ENCODE measurements at regions of chr12 and their contacts with region 1.

Region 1: DNA sequence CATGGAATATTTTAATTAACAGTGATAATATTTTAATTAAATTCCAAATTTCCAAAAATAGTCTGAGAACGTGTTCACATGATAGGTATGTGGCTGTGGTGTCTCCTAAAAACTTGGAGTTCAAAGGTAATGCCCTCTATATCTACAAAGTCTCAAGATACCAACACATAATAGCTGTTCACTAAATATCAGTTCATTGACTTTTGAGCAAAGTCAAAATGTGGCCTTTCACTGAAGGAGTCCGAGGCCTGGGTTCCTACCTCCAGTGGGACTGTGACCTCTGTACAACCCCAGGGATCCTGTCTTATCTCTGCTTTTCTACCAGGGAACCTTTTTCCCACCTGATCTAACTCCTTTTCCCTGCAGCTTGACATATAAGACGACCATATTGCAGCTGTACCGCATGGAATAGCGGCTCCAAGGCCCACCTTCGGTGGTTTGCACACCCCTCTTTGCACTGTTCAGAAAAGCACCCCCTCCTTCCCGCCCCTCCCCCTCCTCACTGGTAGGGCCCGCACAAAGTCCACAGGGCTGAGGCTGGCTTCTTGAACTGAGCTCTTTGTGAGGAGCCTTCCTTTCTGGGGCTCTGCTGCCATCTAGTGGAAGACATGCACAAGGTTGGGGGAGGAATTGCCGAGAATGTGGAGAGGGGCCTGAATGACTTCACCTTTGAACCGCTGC is 3.1 kb downstream of the CCND2 start:
- DNase-seq: peak; percentile 91
- ATAC-seq: peak; percentile 40
- H3K4me3 ChIP-seq: no peak overlapping the region
- H3K4me3 Mint-ChIP-seq: peak overlapping the region; percentile 99
- H3K27ac ChIP-seq: no peak overlapping the region
- H3K27ac Mint-ChIP-seq: peak overlapping the region; percentile 2
- H3K4me1 ChIP-seq: peaks cover 18 to 37% of the 10 kb centered on the region in 2 donors
- H3K4me1 Mint-ChIP-seq: peaks cover 32% of the 10 kb centered on the region
- H3K27me3 ChIP-seq: no peaks in the 10 kb centered on the region
- H3K27me3 Mint-ChIP-seq: no peaks in the 10 kb centered on the region
- CTCF ChIP-seq: peak; percentile 85

Region 2: DNA sequence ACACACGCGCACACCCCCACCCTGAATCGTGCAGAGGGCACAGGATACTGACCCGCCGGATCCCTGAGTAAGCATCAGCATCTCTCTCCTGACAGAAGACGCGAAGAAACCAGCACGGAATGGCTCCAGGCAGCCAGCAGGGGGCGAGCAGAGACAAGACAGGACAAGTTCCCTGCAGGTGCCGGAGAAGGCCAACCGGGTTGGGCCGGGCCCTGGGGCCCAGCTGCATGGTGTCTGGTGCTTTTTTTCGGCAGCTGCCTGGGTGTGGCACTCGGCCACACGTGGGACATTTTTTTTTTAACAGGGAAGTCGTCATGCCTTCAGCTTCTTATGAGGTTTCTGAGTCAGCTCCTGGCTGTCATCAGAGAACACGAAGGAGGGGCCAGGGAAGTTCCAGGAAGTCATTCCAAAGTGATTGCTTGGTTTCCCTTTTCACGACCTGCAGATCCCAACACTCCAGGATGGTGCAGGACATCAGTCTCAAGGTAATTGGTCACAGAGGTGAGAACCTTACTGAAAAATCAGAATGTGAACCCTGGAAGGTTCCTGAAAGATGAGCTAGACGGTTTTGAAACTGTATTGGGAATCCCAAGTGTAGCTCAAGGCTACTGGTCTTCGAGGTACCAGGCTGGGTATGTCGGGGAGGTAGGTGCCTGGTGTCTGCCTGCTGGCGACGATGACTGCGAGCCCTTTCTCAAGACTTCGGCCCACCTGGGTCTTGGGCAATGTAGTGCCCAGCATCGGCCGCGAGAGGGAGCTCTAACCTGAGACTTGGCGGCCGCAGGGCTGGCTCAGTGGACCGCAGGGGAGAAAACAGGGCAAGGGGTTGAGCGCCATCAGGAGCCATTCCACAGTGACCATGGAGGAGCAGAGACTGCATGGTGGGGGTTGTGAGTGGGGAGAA is 976.5 kb before region 1 on chr12:
- CTCF ChIA-PET with region 1: interaction called, 17 read pairs
- POLR2A ChIA-PET with region 1: no interaction called
- intact Hi-C with region 1: loop called (anchors 10 kb)
- DNase-seq: peak; percentile 89
- ATAC-seq: peak; percentile 90
- H3K4me3 ChIP-seq: peak overlapping the region in 3 of 5 experiments; percentile 35 to 50 (median 39)
- H3K4me3 Mint-ChIP-seq: peak overlapping the region; percentile 79
- H3K27ac ChIP-seq: no peak overlapping the region
- H3K27ac Mint-ChIP-seq: peak overlapping the region; percentile 67
- H3K4me1 ChIP-seq: peaks cover 9 to 16% of the 10 kb centered on the region in 2 donors
- H3K4me1 Mint-ChIP-seq: peaks cover 13% of the 10 kb centered on the region
- H3K27me3 ChIP-seq: peaks cover 0 to 18% (median 0%) of the 10 kb centered on the region in 4 experiments
- H3K27me3 Mint-ChIP-seq: peaks cover 19% of the 10 kb centered on the region
- CTCF ChIP-seq: peak; percentile 81

Region 3: GRCh38 chr12:3964439-3964838 is 312.2 kb before region 1 on chr12:
- CTCF ChIA-PET with region 1: interaction called, 53 read pairs
- POLR2A ChIA-PET with region 1: no interaction called
- intact Hi-C with region 1: loop called (anchors 1 kb)
- DNase-seq: peak; percentile 28
- ATAC-seq: no peak
- H3K4me3 ChIP-seq: no peak overlapping the region
- H3K4me3 Mint-ChIP-seq: no peak overlapping the region
- H3K27ac ChIP-seq: no peak overlapping the region
- H3K27ac Mint-ChIP-seq: no peak overlapping the region
- H3K4me1 ChIP-seq: peaks cover 9 to 10% of the 10 kb centered on the region in 2 donors
- H3K4me1 Mint-ChIP-seq: peaks cover 12% of the 10 kb centered on the region
- H3K27me3 ChIP-seq: no peaks in the 10 kb centered on the region
- H3K27me3 Mint-ChIP-seq: peaks cover 3% of the 10 kb centered on the region
- CTCF ChIP-seq: peak; percentile 21

Region 4: DNA sequence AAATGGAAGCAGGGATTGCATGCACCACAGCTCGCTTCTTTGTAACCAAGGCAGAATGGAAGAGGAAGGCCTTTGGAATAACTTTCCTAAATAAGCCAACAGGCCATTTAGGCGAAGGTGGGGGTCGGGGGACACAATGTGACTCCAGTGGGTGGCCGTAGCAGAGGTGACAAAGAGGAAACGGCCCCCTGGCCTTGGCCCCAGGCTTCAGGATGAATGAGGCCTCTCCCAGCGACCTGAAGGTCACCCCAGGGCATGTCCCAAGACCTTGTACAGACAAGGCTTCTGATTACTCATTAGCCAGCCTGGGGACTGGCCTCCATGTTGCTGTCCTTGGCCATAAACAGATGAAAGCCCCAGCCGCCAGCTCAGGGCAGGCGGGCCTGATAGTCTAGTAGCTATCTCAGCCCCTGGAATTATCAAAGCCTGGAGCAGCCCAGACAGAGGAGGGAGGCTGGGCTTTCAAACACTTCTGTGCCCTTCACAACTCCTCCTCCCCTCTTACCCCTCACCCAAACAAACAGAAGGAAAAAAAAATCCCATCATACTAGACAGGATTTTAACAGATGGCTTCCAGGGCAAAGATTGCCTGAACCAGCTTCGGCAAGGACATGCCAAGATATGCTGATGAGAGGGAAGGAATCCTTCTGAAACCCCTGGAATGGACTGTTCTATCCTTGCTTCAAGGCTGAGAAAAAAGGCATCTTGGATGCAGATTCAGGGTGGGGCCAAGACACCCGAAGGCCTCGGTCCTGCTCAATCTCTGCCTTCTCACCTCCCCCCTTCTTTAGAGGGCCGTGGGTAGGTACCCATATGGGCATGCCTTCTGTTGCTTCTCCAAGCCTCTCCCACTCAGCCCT is 261.2 kb before region 1 on chr12:
- CTCF ChIA-PET with region 1: no interaction called
- POLR2A ChIA-PET with region 1: no interaction called
- intact Hi-C with region 1: no loop called
- DNase-seq: no peak
- ATAC-seq: no peak
- H3K4me3 ChIP-seq: no peak overlapping the region
- H3K4me3 Mint-ChIP-seq: no peak overlapping the region
- H3K27ac ChIP-seq: no peak overlapping the region
- H3K27ac Mint-ChIP-seq: no peak overlapping the region
- H3K4me1 ChIP-seq: no peaks in the 10 kb centered on the region
- H3K4me1 Mint-ChIP-seq: no peaks in the 10 kb centered on the region
- H3K27me3 ChIP-seq: no peaks in the 10 kb centered on the region
- H3K27me3 Mint-ChIP-seq: no peaks in the 10 kb centered on the region
- CTCF ChIP-seq: no peak

Region 5: GRCh38 chr12:4037747-4038312 is 238.8 kb before region 1 on chr12:
- CTCF ChIA-PET with region 1: interaction called, 39 read pairs
- POLR2A ChIA-PET with region 1: no interaction called
- intact Hi-C with region 1: no loop called
- DNase-seq: no peak
- ATAC-seq: no peak
- H3K4me3 ChIP-seq: no peak overlapping the region
- H3K4me3 Mint-ChIP-seq: no peak overlapping the region
- H3K27ac ChIP-seq: no peak overlapping the region
- H3K27ac Mint-ChIP-seq: no peak overlapping the region
- H3K4me1 ChIP-seq: no peaks in the 10 kb centered on the region
- H3K4me1 Mint-ChIP-seq: no peaks in the 10 kb centered on the region
- H3K27me3 ChIP-seq: peaks cover 0 to 2% (median 0%) of the 10 kb centered on the region in 4 experiments
- H3K27me3 Mint-ChIP-seq: peaks cover 31% of the 10 kb centered on the region
- CTCF ChIP-seq: peak; percentile 29

Region 6: GRCh38 chr12:4118017-4118510 is 158.6 kb before region 1 on chr12:
- CTCF ChIA-PET with region 1: interaction called, 42 read pairs
- POLR2A ChIA-PET with region 1: interaction called, 28 read pairs
- intact Hi-C with region 1: no loop called
- DNase-seq: peak; percentile 90
- ATAC-seq: peak; percentile 90
- H3K4me3 ChIP-seq: peak overlapping the region in 3 of 5 experiments; percentile 21 to 56 (median 34)
- H3K4me3 Mint-ChIP-seq: peak overlapping the region; percentile 78
- H3K27ac ChIP-seq: peak overlapping the region; percentile 47 to 59
- H3K27ac Mint-ChIP-seq: peak overlapping the region; percentile 85
- H3K4me1 ChIP-seq: peaks cover 49 to 51% of the 10 kb centered on the region in 2 donors
- H3K4me1 Mint-ChIP-seq: peaks cover 54% of the 10 kb centered on the region
- H3K27me3 ChIP-seq: peaks cover 0 to 1% (median 0%) of the 10 kb centered on the region in 4 experiments
- H3K27me3 Mint-ChIP-seq: no peaks in the 10 kb centered on the region
- CTCF ChIP-seq: no peak

Region 7: DNA sequence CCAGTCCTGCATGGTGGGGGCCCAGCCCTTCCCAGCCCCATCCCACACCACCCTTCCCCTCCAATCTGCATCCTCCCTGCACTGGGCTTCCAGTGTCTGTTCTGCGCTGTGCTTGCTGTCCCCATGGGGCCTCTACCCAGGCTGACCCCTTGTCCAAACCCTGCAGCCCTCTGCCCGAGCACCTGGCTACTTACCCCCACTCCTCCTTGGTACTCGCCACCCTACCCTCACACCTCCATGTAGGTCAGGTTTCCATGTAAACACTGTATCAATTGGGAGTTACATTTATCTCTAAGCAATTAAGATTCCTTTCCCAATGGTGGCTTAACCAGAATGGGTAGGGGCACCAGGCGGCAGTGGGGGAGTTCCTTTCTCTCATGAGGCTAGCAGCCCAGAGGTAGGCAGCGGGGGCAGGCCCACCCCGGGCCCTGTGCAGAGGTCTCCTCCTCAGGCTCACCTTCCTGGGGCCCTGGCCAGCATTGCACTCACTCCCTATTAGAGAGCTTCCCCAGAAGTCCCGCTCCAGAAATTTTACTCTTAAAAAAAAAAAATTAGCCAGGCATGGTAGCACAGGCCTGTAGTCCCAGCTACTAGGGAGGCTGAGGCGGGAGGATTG is 79.8 kb before region 1 on chr12:
- CTCF ChIA-PET with region 1: interaction called, 32 read pairs
- POLR2A ChIA-PET with region 1: interaction called, 8 read pairs
- intact Hi-C with region 1: no loop called
- DNase-seq: no peak
- ATAC-seq: no peak
- H3K4me3 ChIP-seq: no peak overlapping the region
- H3K4me3 Mint-ChIP-seq: no peak overlapping the region
- H3K27ac ChIP-seq: no peak overlapping the region
- H3K27ac Mint-ChIP-seq: no peak overlapping the region
- H3K4me1 ChIP-seq: peaks cover 34 to 40% of the 10 kb centered on the region in 2 donors
- H3K4me1 Mint-ChIP-seq: peaks cover 32% of the 10 kb centered on the region
- H3K27me3 ChIP-seq: no peaks in the 10 kb centered on the region
- H3K27me3 Mint-ChIP-seq: no peaks in the 10 kb centered on the region
- CTCF ChIP-seq: no peak

Region 8: DNA sequence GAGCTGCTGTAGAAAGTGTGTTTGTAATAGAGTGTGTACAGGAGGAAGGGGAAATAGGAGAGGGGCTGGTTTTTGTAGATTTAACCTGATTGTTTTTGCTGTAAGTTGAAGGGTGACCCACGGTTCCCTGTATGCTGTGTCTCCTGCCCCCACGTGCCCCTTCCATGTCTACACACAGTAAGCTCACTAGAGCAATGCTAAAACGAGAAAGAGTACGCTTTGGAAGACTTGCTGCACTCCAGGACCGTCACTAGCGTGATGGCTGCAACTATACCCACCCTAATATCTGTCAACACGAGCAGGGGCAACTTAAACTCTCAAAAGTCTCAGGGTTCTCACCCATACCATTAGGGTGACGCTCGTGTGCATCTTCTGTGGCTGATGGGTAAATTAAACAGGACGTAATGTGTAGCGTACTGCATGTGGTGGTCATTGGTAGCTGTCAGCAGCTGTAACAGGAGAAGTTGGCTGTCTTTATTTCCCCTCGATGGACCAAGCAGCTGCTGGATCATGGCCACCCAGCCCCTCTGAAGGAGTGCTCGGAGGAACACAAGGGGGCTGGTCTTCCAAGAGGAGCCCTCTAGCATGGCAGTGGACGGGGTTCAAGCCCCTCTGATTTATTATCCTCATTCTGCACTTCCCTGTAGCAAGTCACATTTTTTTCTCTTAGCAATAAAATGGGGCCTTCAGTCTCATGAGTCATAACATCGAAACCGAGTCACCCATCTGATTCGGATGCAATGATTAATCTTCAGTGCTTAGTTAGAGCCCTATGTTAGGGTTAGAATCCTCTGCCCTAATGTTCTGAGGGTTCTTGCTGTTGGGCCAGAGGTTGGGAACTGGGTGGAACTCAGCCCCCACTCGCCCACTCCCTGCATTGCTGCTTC is 10.9 kb after region 1 on chr12:
- CTCF ChIA-PET with region 1: interaction called, 32 read pairs
- POLR2A ChIA-PET with region 1: interaction called, 8 read pairs
- intact Hi-C with region 1: no loop called
- DNase-seq: no peak
- ATAC-seq: no peak
- H3K4me3 ChIP-seq: no peak overlapping the region
- H3K4me3 Mint-ChIP-seq: no peak overlapping the region
- H3K27ac ChIP-seq: no peak overlapping the region
- H3K27ac Mint-ChIP-seq: peak overlapping the region; percentile 6
- H3K4me1 ChIP-seq: peaks cover 24 to 34% of the 10 kb centered on the region in 2 donors
- H3K4me1 Mint-ChIP-seq: peaks cover 36% of the 10 kb centered on the region
- H3K27me3 ChIP-seq: no peaks in the 10 kb centered on the region
- H3K27me3 Mint-ChIP-seq: no peaks in the 10 kb centered on the region
- CTCF ChIP-seq: no peak

Measured in B cell (primary cell).